Right cardiac atrium (tissue), 5 donors: ENCODE measurements at regions of chr16 and their contacts with region 1.

Region 1: GRCh38 chr16:58317608-58318152 is 22.9 kb upstream of the PRSS54 start:
- DNase-seq: no peak
- ATAC-seq: peak in 1 of 2 donors; percentile 70
- H3K4me3 ChIP-seq: no peak overlapping the region
- H3K27ac ChIP-seq: no peak overlapping the region
- H3K4me1 ChIP-seq: no peaks in the 10 kb centered on the region
- H3K27me3 ChIP-seq: no peaks in the 10 kb centered on the region

Region 2: GRCh38 chr16:58160855-58161254 is 156.8 kb before region 1 on chr16:
- intact Hi-C with region 1: no loop called
- DNase-seq: no peak
- ATAC-seq: no peak
- H3K4me3 ChIP-seq: no peak overlapping the region
- H3K27ac ChIP-seq: no peak overlapping the region
- H3K4me1 ChIP-seq: no peaks in the 10 kb centered on the region
- H3K27me3 ChIP-seq: no peaks in the 10 kb centered on the region

Region 3: GRCh38 chr16:58306327-58306726 is 11.4 kb before region 1 on chr16:
- intact Hi-C with region 1: loop called in 1 of 4 experiments (anchors 1 kb)
- DNase-seq: peak in 2 of 3 donors; percentile 27 to 49
- ATAC-seq: no peak
- H3K4me3 ChIP-seq: no peak overlapping the region
- H3K27ac ChIP-seq: no peak overlapping the region
- H3K4me1 ChIP-seq: no peaks in the 10 kb centered on the region
- H3K27me3 ChIP-seq: no peaks in the 10 kb centered on the region

Region 4: GRCh38 chr16:58678716-58679115 is 361.0 kb after region 1 on chr16:
- intact Hi-C with region 1: no loop called
- DNase-seq: no peak
- ATAC-seq: peak; percentile 10 to 40
- H3K4me3 ChIP-seq: no peak overlapping the region
- H3K27ac ChIP-seq: no peak overlapping the region
- H3K4me1 ChIP-seq: peaks cover 4% of the 10 kb centered on the region
- H3K27me3 ChIP-seq: no peaks in the 10 kb centered on the region